ENCODE measurements at regions of chr13 and their contacts with region 1.

Region 1: GRCh38 chr13:49171358-49171757 is 48.8 kb upstream of the MLNR start:
- DNase-seq: no peak
- ATAC-seq: no peak
- H3K4me3 ChIP-seq: no peak overlapping the region
- H3K27ac ChIP-seq: no peak overlapping the region
- H3K4me1 ChIP-seq: no peaks in the 10 kb centered on the region
- H3K27me3 ChIP-seq: no peaks in the 10 kb centered on the region
- CTCF ChIP-seq: no peak

Region 2: DNA sequence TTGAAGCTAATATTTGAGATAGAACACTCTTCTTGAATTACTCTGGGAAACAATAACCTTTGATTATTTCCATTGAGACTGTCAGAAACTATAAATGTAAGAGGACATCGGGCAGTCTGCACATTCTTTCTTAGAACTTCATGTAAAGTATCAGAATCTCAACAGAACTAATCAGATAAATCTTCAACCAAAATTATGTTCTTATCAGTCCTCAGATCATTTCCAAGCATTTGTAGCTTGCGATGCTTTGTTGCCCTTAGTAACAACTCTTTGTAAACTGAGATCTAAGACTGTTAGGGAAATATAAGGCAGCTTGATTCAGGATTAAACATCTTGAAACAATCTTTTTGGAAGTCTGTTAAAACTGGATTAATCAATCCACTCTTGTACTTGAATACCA is 125.4 kb before region 1 on chr13:
- CTCF ChIA-PET with region 1: no interaction called
- POLR2A ChIA-PET with region 1: no interaction called
- in situ Hi-C with region 1: no loop called
- intact Hi-C with region 1: no loop called
- DNase-seq: no peak
- ATAC-seq: no peak
- H3K4me3 ChIP-seq: no peak overlapping the region
- H3K27ac ChIP-seq: no peak overlapping the region
- H3K4me1 ChIP-seq: no peaks in the 10 kb centered on the region
- H3K27me3 ChIP-seq: no peaks in the 10 kb centered on the region
- CTCF ChIP-seq: no peak

Region 3: DNA sequence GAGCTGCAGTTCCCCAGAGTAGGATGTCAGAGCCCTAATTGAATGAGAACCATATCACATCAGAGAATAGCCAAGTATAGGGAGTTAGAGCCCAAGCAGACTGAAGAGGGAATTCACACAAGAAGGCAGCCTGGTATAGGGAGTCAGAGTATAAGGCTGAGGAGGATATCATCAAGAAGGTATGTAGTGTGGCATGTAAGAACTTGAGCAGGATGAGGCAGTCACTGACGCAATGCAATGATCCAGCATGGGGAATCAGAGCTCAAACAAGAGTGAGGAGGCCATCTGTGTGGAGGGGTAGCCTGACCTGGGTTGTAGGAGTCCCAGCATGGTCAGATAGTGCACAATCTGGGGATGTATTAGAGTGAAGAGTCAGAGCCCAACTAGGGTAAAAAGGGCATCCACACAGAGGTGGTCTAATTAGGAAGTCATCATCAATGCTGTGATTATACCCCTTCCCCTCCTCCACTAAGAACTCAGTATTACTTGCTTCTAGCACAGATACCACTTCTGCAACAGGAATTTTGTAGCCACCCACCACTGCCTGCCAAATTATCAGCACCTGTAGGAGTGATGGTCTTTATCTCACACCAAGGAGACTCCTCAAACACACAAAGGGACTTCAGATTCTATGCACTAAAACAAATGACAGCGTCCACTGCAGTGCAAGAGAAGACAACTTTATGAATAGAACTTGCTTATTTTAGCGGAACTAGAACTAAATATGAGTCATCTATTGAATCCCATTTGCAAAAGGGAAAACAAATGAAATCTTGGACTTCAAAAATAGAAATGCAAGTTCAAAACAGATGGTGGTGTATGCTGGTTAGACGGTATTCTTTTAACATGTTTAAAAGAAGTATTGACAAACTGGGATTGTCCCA is 88.5 kb before region 1 on chr13:
- CTCF ChIA-PET with region 1: no interaction called
- POLR2A ChIA-PET with region 1: interaction called, 14 read pairs
- in situ Hi-C with region 1: no loop called
- intact Hi-C with region 1: no loop called
- DNase-seq: no peak
- ATAC-seq: no peak
- H3K4me3 ChIP-seq: no peak overlapping the region
- H3K27ac ChIP-seq: no peak overlapping the region
- H3K4me1 ChIP-seq: no peaks in the 10 kb centered on the region
- H3K27me3 ChIP-seq: no peaks in the 10 kb centered on the region
- CTCF ChIP-seq: no peak

Region 4: DNA sequence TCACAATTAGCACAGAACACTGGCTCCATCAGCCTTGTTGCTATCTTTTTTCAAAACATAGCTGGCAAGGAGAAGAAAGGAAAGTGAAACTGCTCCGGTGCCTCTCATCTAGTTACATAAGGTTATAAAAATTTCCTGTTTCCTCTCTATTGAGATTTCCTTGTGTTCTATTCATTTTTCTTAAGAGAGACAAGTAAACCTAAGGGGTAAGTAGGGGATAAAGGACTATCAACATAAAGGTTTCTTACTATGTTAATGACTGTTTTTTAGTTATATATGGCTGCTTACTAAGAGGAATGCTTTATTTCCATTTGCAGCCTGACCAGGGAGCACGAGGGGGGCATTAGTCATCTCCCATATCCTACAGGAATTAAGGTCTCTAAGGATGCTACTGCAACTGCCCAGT is 24.4 kb before region 1 on chr13:
- CTCF ChIA-PET with region 1: no interaction called
- POLR2A ChIA-PET with region 1: no interaction called
- in situ Hi-C with region 1: no loop called
- intact Hi-C with region 1: no loop called
- DNase-seq: peak; percentile 4
- ATAC-seq: no peak
- H3K4me3 ChIP-seq: no peak overlapping the region
- H3K27ac ChIP-seq: no peak overlapping the region
- H3K4me1 ChIP-seq: no peaks in the 10 kb centered on the region
- H3K27me3 ChIP-seq: no peaks in the 10 kb centered on the region
- CTCF ChIP-seq: no peak